B cell (primary cell): ENCODE measurements at regions of chr10 and their contacts with region 1.

Region 1: DNA sequence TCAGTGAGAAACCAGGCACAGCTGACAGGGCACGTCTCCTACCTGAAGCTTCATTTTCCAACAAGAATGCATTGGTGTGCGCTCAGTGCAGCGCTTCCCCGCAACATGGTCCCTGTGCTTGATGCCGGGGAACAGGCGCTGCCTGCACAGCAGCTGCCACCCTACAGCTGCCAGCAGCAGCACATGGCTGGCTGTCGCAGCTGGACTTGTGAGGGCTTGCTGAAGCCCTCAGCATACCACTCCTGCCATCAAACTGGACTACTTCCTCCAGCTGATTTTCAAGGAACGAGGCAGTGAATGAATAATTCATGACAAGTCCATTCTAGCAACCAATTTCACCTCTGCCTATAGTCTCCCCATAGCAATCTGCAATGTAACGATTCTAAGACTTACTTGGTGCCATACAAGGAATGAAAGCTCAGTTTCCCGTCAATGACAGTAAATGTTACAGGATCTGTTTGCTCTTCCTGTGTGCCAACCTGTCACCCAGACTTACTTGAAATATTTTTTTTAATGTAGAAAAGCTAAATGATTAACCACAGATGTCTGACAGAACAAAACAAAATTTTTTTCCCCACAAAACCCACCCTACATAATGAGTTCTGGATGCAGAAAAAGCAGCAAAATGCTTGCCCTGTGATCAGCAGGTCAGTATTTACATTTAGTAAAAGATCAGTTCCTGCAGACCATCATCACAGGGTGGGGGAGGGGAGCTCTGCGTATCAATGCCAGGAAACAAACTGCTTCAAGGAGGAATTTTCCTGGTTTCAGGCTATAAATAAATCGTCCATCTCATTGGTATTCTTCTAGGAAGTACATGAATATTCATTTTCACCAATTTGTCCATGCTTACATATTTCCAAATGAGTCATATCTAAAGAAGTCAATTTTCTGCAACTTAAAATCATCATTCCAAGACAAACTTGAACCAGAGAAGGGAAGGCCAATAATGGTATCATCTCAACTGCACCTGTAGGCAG is 140.6 kb downstream of the ALOX5 start:
- DNase-seq: no peak
- ATAC-seq: no peak
- H3K4me3 ChIP-seq: no peak overlapping the region
- H3K4me3 Mint-ChIP-seq: no peak overlapping the region
- H3K27ac ChIP-seq: no peak overlapping the region
- H3K27ac Mint-ChIP-seq: no peak overlapping the region
- H3K4me1 ChIP-seq: no peaks in the 10 kb centered on the region
- H3K4me1 Mint-ChIP-seq: peaks cover 19% of the 10 kb centered on the region
- H3K27me3 ChIP-seq: no peaks in the 10 kb centered on the region
- H3K27me3 Mint-ChIP-seq: no peaks in the 10 kb centered on the region
- CTCF ChIP-seq: no peak

Region 2: DNA sequence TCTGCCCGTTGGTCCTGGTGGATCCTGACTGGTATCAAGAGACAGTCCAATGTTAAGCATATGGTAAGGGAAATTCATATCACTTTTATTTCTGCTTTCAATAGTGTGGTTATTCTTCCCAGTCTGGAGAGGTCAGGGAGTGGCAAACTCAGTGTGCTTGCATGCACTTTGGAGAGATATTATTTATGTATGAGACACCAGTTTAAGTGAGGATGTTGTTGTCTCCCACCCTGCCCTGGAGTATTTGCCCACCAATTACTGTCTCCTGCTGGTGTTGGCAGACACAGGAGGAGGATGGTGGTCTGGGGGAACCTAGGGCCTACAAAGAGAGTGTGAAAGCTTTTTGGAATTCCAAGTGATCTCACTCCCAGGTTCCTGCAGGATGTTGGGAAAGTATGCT is 258.9 kb before region 1 on chr10:
- CTCF ChIA-PET with region 1: no interaction called
- POLR2A ChIA-PET with region 1: no interaction called
- intact Hi-C with region 1: no loop called
- DNase-seq: no peak
- ATAC-seq: no peak
- H3K4me3 ChIP-seq: no peak overlapping the region
- H3K4me3 Mint-ChIP-seq: no peak overlapping the region
- H3K27ac ChIP-seq: no peak overlapping the region
- H3K27ac Mint-ChIP-seq: no peak overlapping the region
- H3K4me1 ChIP-seq: peaks cover 8 to 13% of the 10 kb centered on the region in 2 donors
- H3K4me1 Mint-ChIP-seq: peaks cover 17% of the 10 kb centered on the region
- H3K27me3 ChIP-seq: no peaks in the 10 kb centered on the region
- H3K27me3 Mint-ChIP-seq: no peaks in the 10 kb centered on the region
- CTCF ChIP-seq: no peak

Region 3: DNA sequence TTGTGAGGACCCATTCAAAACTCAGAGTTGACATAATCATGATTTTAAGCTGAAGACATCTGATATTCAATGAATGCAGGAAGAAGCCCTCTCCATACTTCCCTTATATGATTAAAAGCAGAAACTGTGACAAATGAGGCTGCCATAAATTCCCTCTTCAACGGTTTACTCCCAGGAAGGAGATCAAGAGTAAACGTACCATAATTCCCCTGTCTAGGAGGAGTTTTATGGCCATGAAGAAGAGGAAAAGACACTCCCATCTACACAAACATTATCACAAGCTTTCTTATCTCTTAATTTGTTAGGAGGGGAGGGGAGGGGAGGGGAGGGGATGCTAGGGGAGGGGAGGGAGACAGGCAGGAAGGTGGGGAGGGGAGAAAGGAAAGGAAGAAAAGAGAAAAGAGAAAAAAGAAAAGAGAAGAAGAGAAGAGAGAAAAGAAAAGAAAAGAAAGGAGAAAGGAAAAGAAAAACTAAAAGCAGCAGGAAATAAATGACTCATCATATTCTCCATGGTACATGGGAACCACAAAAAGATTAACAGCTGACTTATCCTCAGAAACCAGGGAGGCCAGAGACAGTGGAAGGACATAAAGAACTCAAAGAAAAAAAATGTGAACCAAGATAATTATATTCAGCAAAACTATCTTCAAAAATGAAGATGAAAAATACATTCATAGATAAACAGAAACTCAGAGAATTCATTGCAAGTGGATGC is 19.0 kb before region 1 on chr10:
- CTCF ChIA-PET with region 1: no interaction called
- POLR2A ChIA-PET with region 1: no interaction called
- intact Hi-C with region 1: no loop called
- DNase-seq: no peak
- ATAC-seq: no peak
- H3K4me3 ChIP-seq: no peak overlapping the region
- H3K4me3 Mint-ChIP-seq: no peak overlapping the region
- H3K27ac ChIP-seq: no peak overlapping the region
- H3K27ac Mint-ChIP-seq: no peak overlapping the region
- H3K4me1 ChIP-seq: no peaks in the 10 kb centered on the region
- H3K4me1 Mint-ChIP-seq: peaks cover 25% of the 10 kb centered on the region
- H3K27me3 ChIP-seq: no peaks in the 10 kb centered on the region
- H3K27me3 Mint-ChIP-seq: no peaks in the 10 kb centered on the region
- CTCF ChIP-seq: no peak

Region 4: GRCh38 chr10:45553155-45553554 is 38.6 kb after region 1 on chr10:
- CTCF ChIA-PET with region 1: no interaction called
- POLR2A ChIA-PET with region 1: no interaction called
- intact Hi-C with region 1: loop called (anchors 5 kb)
- DNase-seq: no peak
- ATAC-seq: no peak
- H3K4me3 ChIP-seq: no peak overlapping the region
- H3K4me3 Mint-ChIP-seq: no peak overlapping the region
- H3K27ac ChIP-seq: no peak overlapping the region
- H3K27ac Mint-ChIP-seq: no peak overlapping the region
- H3K4me1 ChIP-seq: peaks cover 13 to 18% of the 10 kb centered on the region in 2 donors
- H3K4me1 Mint-ChIP-seq: peaks cover 19% of the 10 kb centered on the region
- H3K27me3 ChIP-seq: no peaks in the 10 kb centered on the region
- H3K27me3 Mint-ChIP-seq: no peaks in the 10 kb centered on the region
- CTCF ChIP-seq: no peak